Right ventricle myocardium inferior (tissue), 1 donor: ENCODE measurements at regions of chr9 and their contacts with region 1.

Region 1: GRCh38 chr9:126781186-126782052 is 23.4 kb upstream of the ZBTB43 start:
- DNase-seq: peak; percentile 87
- ATAC-seq: peak; percentile 66

Region 2: DNA sequence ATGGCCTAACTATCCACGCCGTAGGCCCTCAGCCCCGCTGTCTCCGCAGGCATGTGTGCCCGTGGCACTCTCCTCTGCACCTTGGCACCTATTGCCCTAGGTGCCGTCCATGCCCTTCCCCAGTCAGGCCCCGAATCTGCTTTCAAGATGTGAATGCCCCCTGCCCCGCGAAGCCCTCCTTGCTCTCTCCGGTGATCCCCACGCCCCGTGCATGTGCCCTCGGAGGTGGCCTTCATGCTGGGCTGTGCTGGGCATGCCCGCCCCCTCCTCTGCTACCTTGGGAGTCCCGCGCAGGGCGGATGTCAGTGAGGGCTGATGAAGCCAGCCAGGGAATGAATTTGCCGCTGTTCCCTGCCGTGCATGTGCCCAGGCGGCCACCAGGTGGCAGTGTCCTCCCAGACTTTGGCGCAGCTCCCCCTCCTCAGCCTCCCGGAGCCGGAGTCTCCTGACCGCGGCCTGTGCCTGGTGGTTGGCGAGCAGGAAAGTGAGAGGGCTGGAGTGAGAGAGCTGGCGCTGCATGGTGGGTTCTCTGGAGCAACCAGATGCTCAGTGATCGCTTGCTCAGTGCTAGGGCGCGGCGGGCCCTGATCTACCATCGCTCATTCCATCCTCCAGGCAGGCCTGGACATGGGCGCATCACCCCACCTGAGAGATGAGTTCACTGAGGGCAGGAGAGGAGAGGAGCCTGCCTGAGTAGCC is 280.6 kb before region 1 on chr9:
- intact Hi-C with region 1: loop called (anchors 5 kb)
- DNase-seq: peak; percentile 91
- ATAC-seq: peak; percentile 75

Region 3: DNA sequence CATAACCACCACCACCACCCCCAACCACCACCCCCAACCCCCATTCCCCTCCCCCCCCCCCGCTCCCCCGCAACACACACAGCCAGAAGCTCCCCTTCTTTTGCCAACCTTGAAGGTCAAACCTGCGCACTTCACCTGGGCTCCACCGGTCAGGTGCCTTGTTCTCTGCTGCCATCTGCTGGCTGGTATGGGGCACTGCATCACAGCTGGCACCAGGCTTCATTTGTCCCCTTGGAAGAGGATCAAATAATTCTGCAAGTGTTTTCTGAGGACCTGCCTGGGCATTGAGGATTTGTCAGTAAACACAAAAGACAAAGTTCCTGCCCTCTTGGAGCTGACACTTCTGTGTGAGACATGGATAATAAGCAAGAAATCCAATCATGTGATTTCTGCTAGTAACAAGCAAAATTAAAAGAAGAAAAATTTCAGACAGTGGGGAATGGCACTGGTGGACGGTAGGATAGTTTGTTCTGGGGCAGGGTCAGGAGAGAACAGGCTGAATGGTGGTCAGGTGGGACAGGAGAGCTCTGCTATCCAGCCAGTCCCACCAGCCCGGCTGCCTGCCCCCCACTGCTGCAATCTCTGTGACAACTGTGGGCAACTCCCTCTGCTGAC is 223.3 kb before region 1 on chr9:
- intact Hi-C with region 1: loop called (anchors 10 kb)
- DNase-seq: no peak
- ATAC-seq: peak; percentile 67

Region 4: DNA sequence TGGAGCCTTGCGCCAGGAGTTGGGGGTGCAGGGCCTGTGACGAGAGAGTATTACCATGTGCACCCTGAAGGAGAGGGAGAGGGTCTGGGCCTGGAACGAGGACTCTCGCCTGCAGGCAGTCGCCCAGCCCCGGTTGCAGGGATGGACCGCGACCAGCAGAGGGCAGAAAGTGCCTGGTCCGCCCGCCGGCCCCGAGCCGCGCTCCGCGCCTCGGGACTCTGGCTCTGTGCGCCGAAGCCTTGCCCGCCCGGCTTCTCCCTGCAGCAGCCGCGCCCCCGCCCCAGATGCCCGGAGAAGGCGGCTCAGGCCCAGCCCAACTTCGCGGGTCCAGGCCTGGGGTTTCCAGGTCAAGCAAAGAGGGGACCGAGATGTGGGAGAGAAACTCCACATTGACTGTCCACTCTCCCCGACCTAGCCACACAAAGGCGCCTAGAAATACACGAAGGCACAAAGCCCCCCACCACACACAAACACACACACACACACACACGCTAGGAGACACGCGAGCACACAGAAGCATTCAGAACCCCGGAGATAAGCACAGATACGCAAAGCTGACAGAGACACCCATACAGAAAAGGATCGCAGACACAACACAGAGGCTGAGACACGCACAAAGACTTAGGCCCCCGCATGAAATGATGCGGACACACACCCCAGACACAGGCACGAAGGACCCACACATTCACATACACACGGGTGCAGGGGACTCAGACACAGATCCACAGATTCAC is 169.7 kb before region 1 on chr9:
- intact Hi-C with region 1: loop called (anchors 2 kb)
- DNase-seq: peak; percentile 88
- ATAC-seq: peak; percentile 84

Region 5: GRCh38 chr9:126690431-126691350 is 90.7 kb before region 1 on chr9:
- intact Hi-C with region 1: no loop called
- DNase-seq: no peak
- ATAC-seq: peak; percentile 64

Region 6: DNA sequence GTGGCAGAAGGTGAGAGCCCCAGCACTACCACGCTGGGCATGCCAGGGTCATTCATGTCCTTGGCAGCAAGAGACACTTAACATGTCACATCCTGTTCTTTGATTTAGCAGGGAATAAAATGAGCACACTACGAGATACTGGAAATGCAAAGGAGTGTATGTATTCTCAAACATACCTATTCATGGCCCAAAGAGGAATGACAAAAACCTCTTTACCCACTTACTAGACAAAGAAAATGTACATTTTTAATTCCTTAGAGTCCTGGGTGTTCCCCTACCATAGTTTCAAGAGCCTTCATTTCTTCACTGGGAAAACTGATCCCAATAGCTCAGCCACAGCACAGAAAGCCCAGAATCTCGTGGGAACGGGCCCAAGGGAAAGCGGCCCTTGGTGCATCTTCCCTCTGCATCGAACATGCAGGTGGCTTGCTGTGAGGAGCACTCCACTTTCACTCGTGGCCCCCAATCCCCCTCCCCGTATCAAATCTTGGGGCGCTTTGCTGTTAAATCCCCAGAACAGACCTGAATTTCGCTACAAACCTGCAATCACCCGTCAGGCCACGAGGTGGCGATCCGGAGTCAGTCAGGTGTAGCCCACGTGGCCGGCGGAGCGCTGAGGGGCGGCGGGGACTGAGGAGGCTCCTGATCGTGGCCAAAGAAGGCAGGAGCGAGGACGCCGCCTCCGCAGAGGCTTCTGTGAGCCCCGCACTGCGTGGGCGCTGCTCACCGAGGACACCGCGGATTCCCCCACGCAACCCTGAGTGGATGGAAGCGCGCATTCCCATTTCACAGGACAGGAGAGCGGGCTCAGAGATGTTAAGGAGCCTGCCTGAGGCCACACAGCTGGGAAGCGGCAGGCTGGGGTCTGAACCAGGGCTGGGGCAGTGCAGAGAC is 76.3 kb before region 1 on chr9:
- intact Hi-C with region 1: loop called (anchors 1 kb)
- DNase-seq: peak; percentile 91
- ATAC-seq: peak; percentile 71

Region 7: GRCh38 chr9:126722252-126723078 is 59.0 kb before region 1 on chr9:
- intact Hi-C with region 1: loop called (anchors 1 kb)
- DNase-seq: peak; percentile 93
- ATAC-seq: peak; percentile 87

Region 8: GRCh38 chr9:126836216-126836615 is 54.8 kb after region 1 on chr9:
- intact Hi-C with region 1: no loop called
- DNase-seq: no peak
- ATAC-seq: no peak